ENCODE measurements at regions of chr12 and their contacts with region 1.

Region 1: GRCh38 chr12:101939856-101940265 is 62.5 kb downstream of the DRAM1 start:
- DNase-seq: no peak
- H3K4me3 ChIP-seq: no peak overlapping the region
- H3K27ac ChIP-seq: peak overlapping the region; percentile 64
- H3K4me1 ChIP-seq: peaks cover 23% of the 10 kb centered on the region
- H3K27me3 ChIP-seq: no peaks in the 10 kb centered on the region
- CTCF ChIP-seq: peak; percentile 39 to 82 (median 61)
- POLR2A ChIP-seq: no peak

Region 2: DNA sequence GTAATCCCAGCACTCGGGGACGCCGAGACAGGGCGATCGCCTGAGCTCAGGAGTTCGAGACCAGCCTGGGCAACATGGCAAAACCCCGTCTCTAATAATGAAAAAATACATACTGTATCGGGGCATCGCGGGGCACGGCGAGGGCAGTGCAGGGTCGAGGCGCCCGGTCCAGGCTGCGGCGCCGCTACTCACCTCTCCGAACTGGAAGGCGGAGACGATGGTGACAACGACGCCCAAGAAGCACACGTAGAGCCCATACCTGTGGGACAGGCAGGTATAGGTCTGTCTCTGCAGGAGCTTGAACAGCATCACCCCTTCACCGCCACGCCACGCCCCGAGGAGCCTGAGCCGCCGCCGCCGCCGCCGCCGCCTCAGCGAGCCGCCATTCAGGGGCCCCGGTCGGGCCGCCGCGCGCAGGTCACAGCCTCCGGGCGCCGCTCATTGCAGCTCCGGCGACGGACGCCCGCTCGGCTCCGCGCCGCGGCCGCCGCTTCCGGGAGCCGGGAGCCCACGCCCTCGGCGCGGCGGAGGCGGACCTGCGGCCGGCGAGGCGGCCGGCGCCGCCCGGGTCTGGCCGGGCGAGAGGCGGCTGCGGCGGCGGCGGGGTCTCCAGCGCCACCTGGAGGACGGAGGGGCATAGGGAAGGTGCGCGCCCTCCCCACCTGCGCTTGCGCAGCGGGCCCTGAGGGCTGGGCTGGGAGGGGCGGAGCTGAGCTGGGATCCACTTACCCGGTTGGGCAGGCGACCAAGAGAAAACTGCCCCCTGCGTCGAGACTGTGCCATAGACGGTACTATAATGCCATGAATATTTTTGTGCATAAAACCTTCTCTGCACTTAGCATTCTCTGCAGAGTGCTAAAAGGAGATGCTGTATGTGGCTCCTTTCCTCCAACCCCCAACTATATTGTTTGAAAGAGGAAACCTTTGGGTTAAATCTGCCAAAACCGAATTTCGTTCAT is 109.2 kb before region 1 on chr12 and contains the start of gene GNPTAB:
- intact Hi-C with region 1: no loop called
- DNase-seq: no peak
- H3K4me3 ChIP-seq: peak within 1 kb of the TSS; percentile 69 to 87
- H3K27ac ChIP-seq: peak within 1 kb of the TSS; percentile 72
- H3K4me1 ChIP-seq: peaks cover 8% of the 10 kb centered on the region
- H3K27me3 ChIP-seq: no peaks in the 10 kb centered on the region
- CTCF ChIP-seq: peak; percentile 58 to 85 (median 71)
- POLR2A ChIP-seq: peak in 1 of 2 donors; percentile 25
- total RNA-seq, gene GNPTAB: 28.7 TPM

Region 3: GRCh38 chr12:102769319-102769916 is 829.6 kb after region 1 on chr12:
- intact Hi-C with region 1: loop called (anchors 5 kb)
- DNase-seq: no peak
- H3K4me3 ChIP-seq: no peak overlapping the region
- H3K27ac ChIP-seq: peak overlapping the region; percentile 36
- H3K4me1 ChIP-seq: no peaks in the 10 kb centered on the region
- H3K27me3 ChIP-seq: no peaks in the 10 kb centered on the region
- CTCF ChIP-seq: peak; percentile 11 to 73 (median 22)
- POLR2A ChIP-seq: no peak